MCF 10A (cell line): ENCODE measurements at regions of chr4 and their contacts with region 1.

Region 1: DNA sequence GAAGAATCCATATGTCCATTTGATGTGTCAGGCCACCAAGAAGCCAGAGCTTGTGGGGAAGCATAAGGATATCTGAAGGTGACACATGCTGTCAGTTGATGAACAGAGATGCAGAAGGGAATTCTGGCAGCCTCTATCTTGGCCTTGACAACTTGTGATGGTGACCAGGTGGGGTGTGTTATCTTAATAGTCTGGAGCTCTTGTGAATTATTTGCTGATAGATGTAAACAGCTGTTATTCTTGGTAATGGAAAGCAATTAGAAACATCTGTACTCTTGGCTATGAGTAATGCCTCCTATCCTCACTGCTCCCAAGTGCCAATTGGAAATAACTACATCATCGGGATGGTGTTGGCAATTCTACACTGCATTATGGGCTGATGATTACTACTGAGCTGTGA is 51.9 kb downstream of the NAA11 start:
- DNase-seq: no peak
- H3K4me3 Mint-ChIP-seq: no peak overlapping the region
- H3K27ac Mint-ChIP-seq: no peak overlapping the region
- H3K4me1 Mint-ChIP-seq: no peaks in the 10 kb centered on the region
- H3K27me3 Mint-ChIP-seq: no peaks in the 10 kb centered on the region
- CTCF ChIP-seq: no peak

Region 2: DNA sequence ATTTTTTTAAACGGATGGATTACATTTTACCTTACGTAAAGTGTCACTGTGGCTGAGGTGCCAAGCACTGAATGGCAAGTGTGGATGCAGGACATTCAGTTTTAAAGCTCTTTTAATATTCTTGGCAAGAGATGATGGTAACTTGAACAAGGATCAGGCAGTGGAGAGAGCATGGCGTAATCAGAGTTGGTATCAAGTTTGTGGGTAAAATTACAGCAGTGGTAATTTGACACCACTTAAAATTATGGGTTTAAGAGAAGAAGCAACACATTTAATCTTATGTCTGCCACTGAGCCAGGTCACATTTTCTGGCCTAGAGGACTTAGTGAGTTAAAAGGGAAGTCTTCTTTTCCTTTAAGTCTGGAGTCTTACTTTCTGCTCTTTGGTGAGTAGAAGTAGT is 48.6 kb before region 1 on chr4:
- CTCF ChIA-PET with region 1: no interaction called
- POLR2A ChIA-PET with region 1: no interaction called
- intact Hi-C with region 1: no loop called
- DNase-seq: peak; percentile 48
- H3K4me3 Mint-ChIP-seq: no peak overlapping the region
- H3K27ac Mint-ChIP-seq: no peak overlapping the region
- H3K4me1 Mint-ChIP-seq: peaks cover 6% of the 10 kb centered on the region
- H3K27me3 Mint-ChIP-seq: no peaks in the 10 kb centered on the region
- CTCF ChIP-seq: no peak

Region 3: GRCh38 chr4:79317711-79318110 is 43.8 kb after region 1 on chr4:
- CTCF ChIA-PET with region 1: no interaction called
- POLR2A ChIA-PET with region 1: no interaction called
- intact Hi-C with region 1: loop called (anchors 1 kb)
- DNase-seq: no peak
- H3K4me3 Mint-ChIP-seq: no peak overlapping the region
- H3K27ac Mint-ChIP-seq: no peak overlapping the region
- H3K4me1 Mint-ChIP-seq: no peaks in the 10 kb centered on the region
- H3K27me3 Mint-ChIP-seq: no peaks in the 10 kb centered on the region
- CTCF ChIP-seq: no peak